ENCODE measurements at regions of chr6 and their contacts with region 1.

Region 1: DNA sequence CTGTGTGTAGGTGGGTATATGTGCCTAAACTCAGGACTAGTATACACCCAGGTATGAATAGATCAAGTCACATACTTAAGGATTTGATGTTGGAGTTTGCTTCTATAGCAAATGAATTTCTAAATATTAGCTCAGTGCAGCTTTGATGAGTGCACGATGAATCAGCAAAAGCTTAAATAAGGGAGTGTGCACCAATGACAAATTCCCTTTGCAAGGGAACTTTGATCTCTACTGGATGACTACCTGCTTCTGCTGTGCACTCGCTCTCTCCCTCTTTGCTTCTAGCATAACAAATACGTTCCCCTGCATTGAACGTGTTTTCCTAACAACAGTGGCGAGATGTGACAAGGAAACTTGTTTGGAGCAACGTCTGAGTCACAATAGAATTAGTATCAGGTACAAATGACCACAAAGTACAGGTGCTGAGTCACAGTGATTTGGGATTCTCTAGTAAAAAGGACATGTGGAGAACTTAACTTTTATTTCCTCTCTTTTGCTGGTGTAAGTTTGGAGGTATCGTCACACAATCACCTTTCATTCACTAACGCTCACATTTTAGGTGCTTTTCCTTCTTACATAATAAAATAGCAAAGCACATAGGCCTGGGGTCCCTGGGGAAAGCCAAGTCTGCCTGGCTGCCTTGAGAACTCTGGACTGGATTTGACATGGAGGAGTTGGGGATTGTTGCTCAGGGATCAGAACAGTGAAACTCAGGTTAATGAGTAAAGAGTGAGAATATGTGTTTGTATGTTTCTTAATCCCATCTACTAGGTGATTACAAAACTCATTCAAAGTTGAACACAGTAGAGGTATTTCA is 49.7 kb downstream of the KLHL31 start:
- DNase-seq: peak; percentile 99
- H3K4me3 ChIP-seq: no peak overlapping the region
- H3K27ac ChIP-seq: peak overlapping the region; percentile 100
- H3K4me1 ChIP-seq: peaks cover 45% of the 10 kb centered on the region
- H3K27me3 ChIP-seq: no peaks in the 10 kb centered on the region
- CTCF ChIP-seq: no peak

Region 2: GRCh38 chr6:52426680-52427079 is 1189.2 kb before region 1 on chr6:
- CTCF ChIA-PET with region 1: no interaction called
- dilution Hi-C with region 1: no loop called
- in situ Hi-C with region 1: no loop called
- intact Hi-C with region 1: no loop called
- DNase-seq: no peak
- H3K4me3 ChIP-seq: no peak overlapping the region
- H3K27ac ChIP-seq: no peak overlapping the region
- H3K4me1 ChIP-seq: peaks cover 18% of the 10 kb centered on the region
- H3K27me3 ChIP-seq: no peaks in the 10 kb centered on the region
- CTCF ChIP-seq: no peak

Region 3: GRCh38 chr6:53544470-53545308 is 71.2 kb before region 1 on chr6 and contains the start of gene GCLC:
- CTCF ChIA-PET with region 1: interaction called, 3 read pairs
- dilution Hi-C with region 1: no loop called
- in situ Hi-C with region 1: loop called (anchors 5 to 10 kb)
- intact Hi-C with region 1: loop called (anchors 1 kb)
- DNase-seq: peak; percentile 94
- H3K4me3 ChIP-seq: peak within 1 kb of the TSS; percentile 73 to 87 (median 79)
- H3K27ac ChIP-seq: peak within 1 kb of the TSS; percentile 85
- H3K4me1 ChIP-seq: peaks cover 23% of the 10 kb centered on the region
- H3K27me3 ChIP-seq: no peaks in the 10 kb centered on the region
- CTCF ChIP-seq: peak; percentile 26 to 55
- total RNA-seq, gene GCLC: 94.7 to 128 TPM

Region 4: GRCh38 chr6:53565886-53566285 is 50.0 kb before region 1 on chr6:
- CTCF ChIA-PET with region 1: no interaction called
- dilution Hi-C with region 1: no loop called
- in situ Hi-C with region 1: no loop called
- intact Hi-C with region 1: loop called (anchors 1 kb)
- DNase-seq: peak; percentile 62
- H3K4me3 ChIP-seq: no peak overlapping the region
- H3K27ac ChIP-seq: no peak overlapping the region
- H3K4me1 ChIP-seq: no peaks in the 10 kb centered on the region
- H3K27me3 ChIP-seq: no peaks in the 10 kb centered on the region
- CTCF ChIP-seq: no peak

Region 5: DNA sequence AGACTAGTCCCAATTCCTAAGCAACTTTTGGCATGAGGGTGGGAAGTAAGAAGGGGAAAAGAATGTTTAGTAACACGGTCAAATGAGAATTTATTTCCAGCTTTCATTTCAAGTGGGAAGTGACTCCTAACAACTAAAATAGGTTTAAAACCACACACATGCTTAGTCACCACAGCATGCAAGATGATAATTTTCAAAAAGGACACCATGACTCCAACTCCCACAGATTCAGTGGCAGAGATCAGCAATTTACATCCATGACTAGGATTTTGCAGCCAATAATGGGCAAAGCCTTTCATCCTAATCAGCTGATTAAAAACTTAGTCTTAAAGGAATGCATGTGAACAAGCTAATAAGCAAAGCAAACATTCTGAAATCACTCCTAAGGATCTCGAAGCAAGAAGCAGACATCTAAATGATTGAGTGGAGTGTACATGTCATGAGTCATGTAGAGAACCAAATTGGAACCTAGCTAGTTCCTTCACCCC is 22.8 kb before region 1 on chr6:
- CTCF ChIA-PET with region 1: no interaction called
- dilution Hi-C with region 1: no loop called
- in situ Hi-C with region 1: no loop called
- intact Hi-C with region 1: loop called (anchors 2 kb)
- DNase-seq: peak; percentile 74
- H3K4me3 ChIP-seq: no peak overlapping the region
- H3K27ac ChIP-seq: no peak overlapping the region
- H3K4me1 ChIP-seq: peaks cover 18% of the 10 kb centered on the region
- H3K27me3 ChIP-seq: no peaks in the 10 kb centered on the region
- CTCF ChIP-seq: no peak

Region 6: DNA sequence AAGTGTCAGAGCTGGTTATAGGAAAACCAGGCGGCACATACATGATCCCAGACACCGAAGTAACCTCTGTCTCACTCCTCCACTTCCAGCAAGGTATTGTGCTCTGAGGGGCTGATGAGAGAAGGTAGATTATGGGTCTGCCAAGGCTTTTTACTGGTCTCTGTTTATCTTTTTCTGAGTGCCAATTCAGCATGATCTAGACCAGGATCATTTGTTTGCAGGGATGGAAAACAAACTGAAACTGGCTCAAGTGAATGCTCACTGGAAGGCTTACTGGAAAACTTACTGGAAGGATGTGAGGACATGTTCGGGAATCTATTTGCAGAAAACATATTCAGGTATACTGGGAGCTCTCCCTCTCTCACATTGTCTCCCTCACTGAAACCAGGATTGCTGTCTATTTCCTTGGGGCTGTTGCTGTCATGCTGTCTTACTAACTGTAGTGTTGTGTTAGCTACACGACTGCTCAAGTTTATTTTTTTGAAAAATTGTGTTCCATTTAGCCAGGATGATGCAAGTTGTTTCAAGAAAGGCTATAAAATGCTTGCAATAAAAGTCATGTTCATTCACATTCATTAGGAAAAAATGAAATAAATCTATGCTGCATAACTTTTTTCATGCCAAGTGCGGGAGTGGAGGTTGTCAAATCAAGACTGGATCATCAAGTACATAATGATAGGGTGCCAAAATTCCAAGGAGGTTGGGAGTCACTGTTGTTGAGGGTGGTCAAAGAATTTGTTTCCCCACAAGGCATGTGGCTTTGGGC is 12.7 kb after region 1 on chr6:
- CTCF ChIA-PET with region 1: interaction called, 4 read pairs
- dilution Hi-C with region 1: no loop called
- in situ Hi-C with region 1: no loop called
- intact Hi-C with region 1: loop called (anchors 1 kb)
- DNase-seq: peak; percentile 94
- H3K4me3 ChIP-seq: peak overlapping the region; percentile 4 to 37 (median 14)
- H3K27ac ChIP-seq: peak overlapping the region; percentile 99
- H3K4me1 ChIP-seq: peaks cover 42% of the 10 kb centered on the region
- H3K27me3 ChIP-seq: no peaks in the 10 kb centered on the region
- CTCF ChIP-seq: no peak

Region 7: DNA sequence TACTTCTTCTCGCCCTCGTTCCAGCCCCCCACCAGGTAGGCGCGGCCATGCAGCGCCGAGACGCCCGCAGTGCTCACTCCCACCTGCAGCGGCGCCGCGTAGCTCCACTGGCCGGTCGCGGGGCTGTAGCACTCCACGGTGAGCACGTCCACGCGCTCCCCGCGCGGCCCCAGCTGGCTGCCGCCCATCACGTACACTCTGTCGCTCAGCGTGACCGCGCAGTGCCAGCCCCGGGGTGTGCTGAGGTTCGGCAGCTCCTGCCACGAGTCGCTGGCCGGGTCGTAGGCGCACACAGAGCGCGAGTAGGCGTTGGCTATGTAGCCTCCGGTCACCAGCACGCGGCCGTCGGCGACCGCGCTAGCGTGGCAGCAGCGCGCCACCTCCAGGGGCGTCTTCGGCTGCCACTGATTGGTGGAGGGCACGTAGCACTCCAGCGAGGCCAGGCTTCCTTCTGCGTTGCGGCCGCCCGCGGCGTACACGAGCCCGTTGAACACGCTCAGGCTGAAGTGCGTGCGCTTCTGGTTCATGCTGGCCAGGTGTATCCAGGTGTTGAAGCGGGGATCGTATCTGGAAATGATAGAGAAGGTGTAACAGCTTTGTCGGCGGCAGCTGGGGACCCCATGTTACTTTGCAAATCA is 36.0 kb after region 1 on chr6:
- CTCF ChIA-PET with region 1: no interaction called
- dilution Hi-C with region 1: no loop called
- in situ Hi-C with region 1: no loop called
- intact Hi-C with region 1: loop called (anchors 1 kb)
- DNase-seq: peak; percentile 85
- H3K4me3 ChIP-seq: peak overlapping the region; percentile 45 to 68 (median 65)
- H3K27ac ChIP-seq: peak overlapping the region; percentile 83
- H3K4me1 ChIP-seq: peaks cover 26% of the 10 kb centered on the region
- H3K27me3 ChIP-seq: no peaks in the 10 kb centered on the region
- CTCF ChIP-seq: peak in 1 of 2 donors; percentile 42